K562 (cell line): ENCODE measurements at regions of chr11 and their contacts with region 1.

Region 1: DNA sequence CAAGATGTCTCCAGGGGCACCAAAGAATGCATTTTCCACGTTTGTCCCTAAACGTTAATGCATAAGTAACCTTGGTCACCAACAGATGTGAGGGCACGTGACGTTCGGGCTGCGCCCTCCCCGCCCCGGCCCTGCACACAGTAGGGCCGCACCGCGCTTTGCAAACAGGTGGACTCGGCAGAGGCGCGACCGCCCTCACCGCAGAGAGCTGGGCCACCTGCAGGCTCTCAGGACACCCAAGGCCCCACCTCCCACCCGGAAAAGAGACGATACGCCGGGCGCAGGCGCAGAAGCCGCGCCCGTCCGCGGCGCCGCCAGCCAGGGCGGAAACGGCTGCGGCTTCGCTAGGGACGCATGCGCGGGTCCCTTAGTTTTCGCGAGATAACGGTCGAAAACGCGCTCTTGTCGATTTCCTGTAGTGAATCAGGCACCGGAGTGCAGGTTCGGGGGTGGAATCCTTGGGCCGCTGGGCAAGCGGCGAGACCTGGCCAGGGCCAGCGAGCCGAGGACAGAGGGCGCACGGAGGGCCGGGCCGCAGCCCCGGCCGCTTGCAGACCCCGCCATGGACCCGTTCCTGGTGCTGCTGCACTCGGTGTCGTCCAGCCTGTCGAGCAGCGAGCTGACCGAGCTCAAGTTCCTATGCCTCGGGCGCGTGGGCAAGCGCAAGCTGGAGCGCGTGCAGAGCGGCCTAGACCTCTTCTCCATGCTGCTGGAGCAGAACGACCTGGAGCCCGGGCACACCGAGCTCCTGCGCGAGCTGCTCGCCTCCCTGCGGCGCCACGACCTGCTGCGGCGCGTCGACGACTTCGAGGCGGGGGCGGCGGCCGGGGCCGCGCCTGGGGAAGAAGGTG is at the start of gene FADD:
- DNase-seq: peak; percentile 93 to 96 (median 95)
- ATAC-seq: peak; percentile 89
- H3K4me3 ChIP-seq: peak within 1 kb of the TSS; percentile 94
- H3K27ac ChIP-seq: peak within 1 kb of the TSS; percentile 91
- H3K4me1 ChIP-seq: peaks cover 15 to 37% of the 10 kb centered on the region in 2 experiments; a peak in 4 of 5 replicates
- H3K27me3 ChIP-seq: peaks cover 0 to 9% of the 10 kb centered on the region in 2 experiments; a peak in 1 of 5 replicates
- CTCF ChIP-seq: no peak
- EP300 ChIP-seq: 0 out of 2 replicates have a peak, but pooled peaks have one; percentile 17
- POLR2A ChIP-seq: peak; percentile 89
- RAD21 ChIP-seq: no peak
- polyA plus RNA-seq, gene FADD: 0.29 to 0.30 TPM

Region 2: DNA sequence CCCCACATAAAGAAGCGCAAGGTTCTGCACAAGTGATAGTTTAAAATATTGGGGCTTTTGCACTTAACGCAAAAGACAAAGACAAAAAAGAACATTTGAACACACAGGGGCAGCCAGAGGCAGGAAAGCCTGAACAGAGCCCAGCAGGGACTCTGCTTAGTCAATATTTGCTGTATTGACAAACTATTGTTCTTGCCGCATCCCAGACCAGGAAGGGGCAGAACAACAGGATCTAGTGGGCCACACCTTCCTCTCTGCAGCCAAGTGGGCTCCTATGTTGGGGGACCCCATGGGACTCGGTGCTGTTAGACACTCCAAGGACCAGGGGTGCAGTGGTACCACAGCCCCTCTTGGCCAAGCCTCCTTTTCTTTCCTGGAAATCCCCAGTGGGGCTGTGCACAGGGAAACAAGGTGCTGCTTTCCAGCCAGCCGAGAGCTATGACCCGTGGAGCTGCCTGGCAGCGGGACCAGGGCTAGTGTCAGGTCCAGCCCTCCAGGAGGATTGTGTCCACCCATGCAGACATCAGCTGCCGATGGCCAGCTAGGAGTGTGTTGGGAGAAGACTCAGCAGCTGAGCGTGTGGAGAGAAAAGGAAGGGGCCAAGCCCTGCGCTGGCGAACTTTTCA is 168.3 kb before region 1 on chr11:
- CTCF ChIA-PET with region 1: no interaction called
- POLR2A ChIA-PET with region 1: no interaction called
- in situ Hi-C with region 1: no loop called
- intact Hi-C with region 1: no loop called
- DNase-seq: no peak
- ATAC-seq: no peak
- H3K4me3 ChIP-seq: no peak overlapping the region
- H3K27ac ChIP-seq: no peak overlapping the region
- H3K4me1 ChIP-seq: no peaks in the 10 kb centered on the region
- H3K27me3 ChIP-seq: peaks cover 26 to 78% of the 10 kb centered on the region in 2 experiments; a peak in 3 of 5 replicates
- CTCF ChIP-seq: no peak
- EP300 ChIP-seq: no peak
- POLR2A ChIP-seq: no peak
- RAD21 ChIP-seq: no peak

Region 3: GRCh38 chr11:70448983-70449567 is 246.0 kb after region 1 on chr11:
- CTCF ChIA-PET with region 1: no interaction called
- POLR2A ChIA-PET with region 1: interaction called, 3 read pairs
- in situ Hi-C with region 1: no loop called
- intact Hi-C with region 1: loop called (anchors 10 kb)
- DNase-seq: peak; percentile 32 to 79 (median 70)
- ATAC-seq: peak; percentile 55; the same call in 2 of the 3 replicates
- H3K4me3 ChIP-seq: no peak overlapping the region
- H3K27ac ChIP-seq: no peak overlapping the region
- H3K4me1 ChIP-seq: no peaks in the 10 kb centered on the region; a peak in 1 of 5 replicates
- H3K27me3 ChIP-seq: peaks cover 9 to 16% of the 10 kb centered on the region in 2 experiments; a peak in 4 of 5 replicates
- CTCF ChIP-seq: peak; percentile 58 to 85 (median 61)
- EP300 ChIP-seq: no peak
- POLR2A ChIP-seq: no peak
- RAD21 ChIP-seq: peak in 1 of 2 experiments; percentile 40; a peak in 2 of 4 replicates